ENCODE measurements at regions of chr15 and their contacts with region 1.

Region 1: GRCh38 chr15:86615816-86616215 is 536.1 kb downstream of the AGBL1 start:
- DNase-seq: peak in 4 of 9 donors; percentile 3 to 27 (median 10)
- ATAC-seq: no peak
- H3K4me3 ChIP-seq: peak overlapping the region; percentile 3
- H3K4me3 Mint-ChIP-seq: peak overlapping the region in 9 of 10 donors; percentile 14 to 73 (median 60)
- H3K27ac ChIP-seq: no peak overlapping the region
- H3K27ac Mint-ChIP-seq: peak overlapping the region in 8 of 9 donors; percentile 3 to 77 (median 28)
- H3K4me1 ChIP-seq: peaks cover 26 to 57% of the 10 kb centered on the region in 2 donors
- H3K4me1 Mint-ChIP-seq: peaks cover 34 to 87% (median 72%) of the 10 kb centered on the region in 7 donors
- H3K27me3 ChIP-seq: no peaks in the 10 kb centered on the region
- H3K27me3 Mint-ChIP-seq: peaks cover 0 to under 1% (median 0%) of the 10 kb centered on the region in 5 donors

Region 2: DNA sequence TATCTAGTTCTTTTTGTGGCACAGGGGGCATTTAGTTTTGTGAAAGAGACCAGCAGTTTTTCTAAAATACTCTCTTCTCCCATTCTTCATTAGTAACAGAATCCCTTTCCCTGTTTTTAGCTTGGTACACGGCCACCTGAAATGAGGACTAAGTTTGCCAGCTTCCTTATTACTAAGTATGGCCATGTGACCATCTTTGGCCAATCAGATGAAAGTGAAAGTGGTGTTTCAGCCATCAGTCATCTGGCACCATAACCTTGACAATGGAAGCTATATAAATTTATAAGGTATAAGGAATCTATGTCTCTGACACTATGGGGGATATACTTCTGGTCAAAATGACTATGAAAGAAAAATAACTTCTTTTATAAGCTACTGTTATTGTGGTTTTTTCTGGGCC is 34.3 kb after region 1 on chr15:
- CTCF ChIA-PET with region 1: interaction called, 4 read pairs
- POLR2A ChIA-PET with region 1: no interaction called
- intact Hi-C with region 1: loop called (anchors 2 to 5 kb)
- DNase-seq: no peak
- ATAC-seq: no peak
- H3K4me3 ChIP-seq: no peak overlapping the region
- H3K4me3 Mint-ChIP-seq: no peak overlapping the region
- H3K27ac ChIP-seq: no peak overlapping the region
- H3K27ac Mint-ChIP-seq: no peak overlapping the region
- H3K4me1 ChIP-seq: peaks cover 37 to 50% of the 10 kb centered on the region in 2 donors
- H3K4me1 Mint-ChIP-seq: peaks cover 24 to 63% (median 52%) of the 10 kb centered on the region in 7 donors
- H3K27me3 ChIP-seq: no peaks in the 10 kb centered on the region
- H3K27me3 Mint-ChIP-seq: peaks cover 0 to 2% (median 0%) of the 10 kb centered on the region in 5 donors

Region 3: GRCh38 chr15:86837294-86838061 is 221.7 kb after region 1 on chr15:
- CTCF ChIA-PET with region 1: no interaction called
- POLR2A ChIA-PET with region 1: no interaction called
- intact Hi-C with region 1: no loop called
- DNase-seq: no peak
- ATAC-seq: no peak
- H3K4me3 ChIP-seq: no peak overlapping the region
- H3K4me3 Mint-ChIP-seq: no peak overlapping the region
- H3K27ac ChIP-seq: no peak overlapping the region
- H3K27ac Mint-ChIP-seq: no peak overlapping the region
- H3K4me1 ChIP-seq: no peaks in the 10 kb centered on the region
- H3K4me1 Mint-ChIP-seq: no peaks in the 10 kb centered on the region
- H3K27me3 ChIP-seq: no peaks in the 10 kb centered on the region
- H3K27me3 Mint-ChIP-seq: peaks cover 0 to 7% (median 0%) of the 10 kb centered on the region in 5 donors